Caco-2 (cell line): ENCODE measurements at regions of chr13 and their contacts with region 1.

Region 1: DNA sequence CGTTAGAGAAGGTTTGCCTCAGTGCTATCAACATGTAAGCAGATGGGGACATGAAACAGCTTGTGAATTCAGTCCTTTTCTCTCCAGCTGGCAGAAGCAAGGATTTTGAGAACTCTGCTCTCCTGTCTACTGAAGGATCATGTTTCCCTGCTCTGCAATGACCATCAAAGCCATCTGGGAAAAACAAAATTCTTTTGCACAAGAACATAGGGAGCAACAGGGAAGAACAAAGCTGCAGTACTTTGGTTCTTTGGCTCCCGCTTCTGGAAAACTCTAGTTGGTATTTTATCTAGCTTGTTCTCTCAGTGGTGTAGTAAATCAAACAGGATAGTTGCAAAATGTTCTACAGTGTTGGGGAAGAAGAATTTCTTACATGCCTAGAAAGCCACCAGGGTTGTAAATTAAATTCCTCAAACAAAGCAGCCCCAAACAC is 270.4 kb downstream of the ENOX1 start:
- DNase-seq: peak; percentile 41 to 67
- H3K4me3 ChIP-seq: no peak overlapping the region
- H3K4me3 Mint-ChIP-seq: peak overlapping the region; percentile 24
- H3K27ac Mint-ChIP-seq: peak overlapping the region; percentile 86
- H3K4me1 ChIP-seq: peaks cover 30% of the 10 kb centered on the region
- H3K4me1 Mint-ChIP-seq: peaks cover 30% of the 10 kb centered on the region
- H3K27me3 ChIP-seq: no peaks in the 10 kb centered on the region
- H3K27me3 Mint-ChIP-seq: no peaks in the 10 kb centered on the region
- CTCF ChIP-seq: no peak

Region 2: DNA sequence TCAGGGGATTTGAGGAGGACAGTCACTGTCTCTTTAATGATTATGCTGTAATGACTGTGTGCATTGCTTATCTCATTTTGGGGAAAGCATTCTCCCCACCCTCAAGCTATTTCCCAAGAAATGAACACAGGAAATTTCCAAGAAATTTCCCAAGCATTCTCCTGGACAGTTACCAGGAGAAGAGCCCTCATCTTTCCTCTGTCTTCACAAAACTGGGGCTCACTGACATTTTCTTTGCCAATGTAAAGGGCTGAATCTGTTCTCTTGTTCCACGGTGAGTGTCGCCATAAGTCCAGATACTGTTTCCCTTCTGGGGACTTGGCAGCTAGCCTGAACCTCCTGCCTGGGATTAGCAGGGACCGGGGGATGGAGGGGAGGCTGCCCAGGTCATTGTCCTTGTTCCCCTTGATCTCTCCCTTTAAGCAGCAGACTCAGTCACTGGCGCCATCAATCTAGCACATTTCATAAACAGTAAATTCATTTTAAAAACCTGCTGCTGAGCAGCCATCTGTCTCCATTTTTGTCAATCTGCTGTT is 320.3 kb before region 1 on chr13:
- CTCF ChIA-PET with region 1: no interaction called
- POLR2A ChIA-PET with region 1: no interaction called
- intact Hi-C with region 1: loop called (anchors 5 kb)
- DNase-seq: no peak
- H3K4me3 ChIP-seq: no peak overlapping the region
- H3K4me3 Mint-ChIP-seq: no peak overlapping the region
- H3K27ac Mint-ChIP-seq: no peak overlapping the region
- H3K4me1 ChIP-seq: peaks cover 38% of the 10 kb centered on the region
- H3K4me1 Mint-ChIP-seq: peaks cover 20% of the 10 kb centered on the region
- H3K27me3 ChIP-seq: no peaks in the 10 kb centered on the region
- H3K27me3 Mint-ChIP-seq: no peaks in the 10 kb centered on the region
- CTCF ChIP-seq: no peak

Region 3: DNA sequence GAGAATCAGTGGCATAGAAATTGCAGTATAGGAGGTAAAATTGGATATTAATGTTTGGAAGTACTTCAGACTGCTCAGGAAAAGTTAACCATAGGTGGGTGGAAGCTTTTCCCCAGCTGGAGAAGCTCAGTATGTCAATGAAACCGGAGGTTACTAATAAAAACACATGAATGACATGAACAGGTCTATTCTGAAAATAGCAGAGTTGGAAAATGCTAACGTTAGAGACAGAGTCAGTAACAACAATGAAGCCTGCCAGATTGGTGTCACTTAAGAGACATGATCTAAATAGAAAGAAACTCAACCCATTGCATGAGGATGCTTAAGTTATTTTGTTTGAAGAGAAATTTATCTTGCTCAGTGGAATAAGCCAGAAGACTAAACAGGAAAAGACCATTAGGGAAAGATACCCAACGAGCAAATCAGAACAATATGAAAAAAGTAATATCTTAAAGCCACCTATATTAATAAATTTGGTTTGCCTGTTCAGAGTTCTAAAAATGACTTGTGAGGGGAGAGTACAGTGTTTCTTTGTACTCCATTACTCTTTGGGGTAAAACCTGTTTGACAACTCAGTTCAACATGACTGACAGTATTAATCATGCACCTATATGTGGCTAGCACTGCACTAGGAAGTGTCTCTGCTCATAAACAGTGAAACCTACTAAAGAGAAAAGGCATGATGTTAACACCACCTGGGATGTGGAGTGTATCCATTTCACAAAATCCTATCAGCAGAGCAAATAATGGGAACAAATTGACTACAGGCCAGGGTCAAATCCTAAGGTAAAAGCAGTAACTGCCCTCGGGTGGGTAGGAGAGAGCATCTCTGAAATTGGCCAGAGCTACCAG is 128.3 kb before region 1 on chr13:
- CTCF ChIA-PET with region 1: no interaction called
- POLR2A ChIA-PET with region 1: no interaction called
- intact Hi-C with region 1: loop called (anchors 5 kb)
- DNase-seq: peak in 1 of 2 experiments; percentile 42
- H3K4me3 ChIP-seq: no peak overlapping the region
- H3K4me3 Mint-ChIP-seq: peak overlapping the region; percentile 60
- H3K27ac Mint-ChIP-seq: peak overlapping the region; percentile 49
- H3K4me1 ChIP-seq: peaks cover 40% of the 10 kb centered on the region
- H3K4me1 Mint-ChIP-seq: peaks cover 19% of the 10 kb centered on the region
- H3K27me3 ChIP-seq: no peaks in the 10 kb centered on the region
- H3K27me3 Mint-ChIP-seq: no peaks in the 10 kb centered on the region
- CTCF ChIP-seq: no peak

Region 4: GRCh38 chr13:43546251-43546650 is 29.8 kb after region 1 on chr13:
- CTCF ChIA-PET with region 1: no interaction called
- POLR2A ChIA-PET with region 1: interaction called, 3 read pairs
- intact Hi-C with region 1: loop called (anchors 1 kb)
- DNase-seq: no peak
- H3K4me3 ChIP-seq: no peak overlapping the region
- H3K4me3 Mint-ChIP-seq: no peak overlapping the region
- H3K27ac Mint-ChIP-seq: no peak overlapping the region
- H3K4me1 ChIP-seq: peaks cover 84% of the 10 kb centered on the region
- H3K4me1 Mint-ChIP-seq: peaks cover 7% of the 10 kb centered on the region
- H3K27me3 ChIP-seq: no peaks in the 10 kb centered on the region
- H3K27me3 Mint-ChIP-seq: no peaks in the 10 kb centered on the region
- CTCF ChIP-seq: no peak

Region 5: DNA sequence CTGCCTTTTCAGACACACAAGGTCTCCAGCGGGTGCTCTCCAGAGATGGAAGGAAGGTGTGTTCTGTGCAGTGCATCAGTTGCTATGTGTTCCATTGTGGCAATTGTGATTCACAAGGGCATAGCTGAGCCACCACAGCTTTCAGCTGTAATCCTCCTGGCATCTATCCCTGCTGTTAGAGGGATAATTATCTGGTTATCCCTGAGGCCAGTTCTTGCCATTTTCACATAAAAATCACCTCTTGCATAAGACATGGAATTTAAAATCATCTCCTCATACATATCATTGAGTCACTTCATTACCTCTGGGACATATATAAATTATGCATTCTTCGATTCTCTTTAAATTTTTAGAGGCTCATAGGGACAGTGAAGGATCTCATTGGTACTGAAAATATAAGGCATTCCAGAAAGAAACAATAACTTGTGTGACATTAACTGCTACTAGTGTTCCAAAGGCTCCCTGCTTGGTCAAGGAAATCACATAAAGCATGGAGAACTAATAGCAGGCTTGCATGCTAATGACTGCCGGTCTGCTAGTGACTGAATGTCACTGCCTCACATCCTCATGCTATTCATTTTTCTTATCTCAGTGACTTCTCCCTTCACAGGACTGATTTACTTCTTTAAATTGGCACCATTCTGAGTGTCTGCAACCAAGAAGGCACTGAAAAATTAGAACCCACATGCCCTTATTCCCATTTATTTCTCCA is 56.4 kb after region 1 on chr13:
- CTCF ChIA-PET with region 1: no interaction called
- POLR2A ChIA-PET with region 1: no interaction called
- intact Hi-C with region 1: loop called (anchors 1 kb)
- DNase-seq: peak in 1 of 2 experiments; percentile 19
- H3K4me3 ChIP-seq: no peak overlapping the region
- H3K4me3 Mint-ChIP-seq: peak overlapping the region; percentile 49
- H3K27ac Mint-ChIP-seq: peak overlapping the region; percentile 87
- H3K4me1 ChIP-seq: peaks cover 63% of the 10 kb centered on the region
- H3K4me1 Mint-ChIP-seq: peaks cover 51% of the 10 kb centered on the region
- H3K27me3 ChIP-seq: no peaks in the 10 kb centered on the region
- H3K27me3 Mint-ChIP-seq: no peaks in the 10 kb centered on the region
- CTCF ChIP-seq: no peak